ENCODE measurements at regions of chr19 and their contacts with region 1.

Region 1: DNA sequence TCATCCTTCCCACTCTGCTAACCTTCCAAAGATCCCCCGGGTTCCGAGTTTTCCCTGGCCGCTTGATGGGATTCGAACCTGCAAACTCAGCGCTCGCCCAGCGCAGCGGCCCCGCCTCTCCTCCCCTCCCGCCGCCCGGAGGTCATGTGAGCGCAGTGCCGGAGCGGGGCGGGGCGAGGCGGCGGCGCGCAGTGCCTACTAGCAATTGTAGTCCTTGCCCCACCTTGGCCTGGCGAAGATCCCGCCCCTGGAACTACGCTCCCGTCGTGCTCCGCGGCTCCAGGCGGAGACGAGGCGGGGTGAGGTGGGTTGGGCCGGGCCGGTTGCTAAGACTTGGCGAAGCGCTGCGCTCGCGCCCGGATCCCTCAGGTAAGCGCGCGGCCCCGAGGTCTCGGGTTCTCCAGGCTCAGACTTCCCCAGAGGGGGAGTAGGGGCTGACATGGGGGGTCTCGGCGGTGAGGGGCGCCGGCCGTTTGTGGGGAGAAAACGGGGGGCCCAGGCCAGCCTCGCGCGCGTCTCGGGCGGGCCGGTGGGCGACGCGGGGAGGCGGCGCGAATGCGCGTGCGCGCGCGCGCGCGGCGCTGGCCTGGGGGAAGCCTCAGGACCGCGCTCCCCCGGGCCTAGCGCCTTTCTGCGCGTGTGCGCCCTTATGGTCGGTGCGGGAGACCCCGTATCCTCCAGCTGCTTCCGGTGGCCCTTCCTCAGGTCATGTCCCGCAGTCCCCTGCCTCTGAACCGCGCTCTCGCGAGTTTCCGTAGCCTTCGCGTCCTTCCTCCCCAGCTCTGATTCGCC is at the starts of genes ADAT3 and SCAMP4:
- DNase-seq: peak; percentile 99
- H3K4me3 ChIP-seq: peak within 1 kb of the TSS; percentile 71
- H3K27ac ChIP-seq: peak within 1 kb of the TSS; percentile 97
- H3K4me1 ChIP-seq: peaks cover 32% of the 10 kb centered on the region
- CTCF ChIP-seq: no peak
- total RNA-seq, gene ADAT3: 5.6 and 7.9 TPM in 2 replicates
- total RNA-seq, gene SCAMP4: 13.4 and 21.3 TPM in 2 replicates

Region 2: DNA sequence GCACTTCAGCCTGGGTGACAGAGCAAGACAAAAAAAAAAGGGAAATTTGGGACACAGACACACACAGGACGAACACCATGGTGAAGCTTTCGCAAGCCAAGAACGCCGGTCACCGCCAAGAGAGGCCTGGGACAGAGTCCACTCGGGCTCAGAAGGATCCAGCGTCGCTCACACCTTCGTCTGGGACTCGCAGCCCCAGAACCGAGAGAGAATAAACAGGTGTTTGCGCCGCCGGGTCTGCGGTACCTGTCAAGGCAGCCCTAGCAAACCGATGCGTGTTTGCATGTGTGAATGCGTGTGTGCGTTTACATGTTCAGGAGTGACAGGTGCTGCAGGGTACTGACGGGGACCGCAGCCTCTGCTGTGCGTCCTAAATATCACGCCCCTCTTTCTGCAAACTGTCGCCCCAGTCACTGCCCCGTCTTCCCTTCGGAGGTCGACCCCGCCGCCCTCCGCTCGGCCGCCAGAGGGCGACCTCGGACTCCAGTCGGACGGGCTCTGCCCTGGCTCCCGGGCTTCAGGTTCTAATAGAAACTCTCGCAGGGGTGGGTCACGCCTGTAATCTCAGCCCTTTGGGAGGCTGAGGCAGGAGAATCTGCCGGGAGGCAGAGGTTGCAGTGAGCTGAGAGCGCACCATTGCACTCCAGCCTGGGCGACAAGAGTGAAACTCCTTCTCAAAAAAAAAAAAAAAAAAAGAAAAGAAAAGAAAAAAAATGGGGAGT is 23.9 kb after region 1 on chr19:
- CTCF ChIA-PET with region 1: no interaction called
- POLR2A ChIA-PET with region 1: no interaction called
- intact Hi-C with region 1: loop called (anchors 2 kb)
- DNase-seq: peak; percentile 89
- H3K4me3 ChIP-seq: peak overlapping the region; percentile 10
- H3K27ac ChIP-seq: no peak overlapping the region
- H3K4me1 ChIP-seq: peaks cover 13% of the 10 kb centered on the region
- CTCF ChIP-seq: peak; percentile 89

Region 3: DNA sequence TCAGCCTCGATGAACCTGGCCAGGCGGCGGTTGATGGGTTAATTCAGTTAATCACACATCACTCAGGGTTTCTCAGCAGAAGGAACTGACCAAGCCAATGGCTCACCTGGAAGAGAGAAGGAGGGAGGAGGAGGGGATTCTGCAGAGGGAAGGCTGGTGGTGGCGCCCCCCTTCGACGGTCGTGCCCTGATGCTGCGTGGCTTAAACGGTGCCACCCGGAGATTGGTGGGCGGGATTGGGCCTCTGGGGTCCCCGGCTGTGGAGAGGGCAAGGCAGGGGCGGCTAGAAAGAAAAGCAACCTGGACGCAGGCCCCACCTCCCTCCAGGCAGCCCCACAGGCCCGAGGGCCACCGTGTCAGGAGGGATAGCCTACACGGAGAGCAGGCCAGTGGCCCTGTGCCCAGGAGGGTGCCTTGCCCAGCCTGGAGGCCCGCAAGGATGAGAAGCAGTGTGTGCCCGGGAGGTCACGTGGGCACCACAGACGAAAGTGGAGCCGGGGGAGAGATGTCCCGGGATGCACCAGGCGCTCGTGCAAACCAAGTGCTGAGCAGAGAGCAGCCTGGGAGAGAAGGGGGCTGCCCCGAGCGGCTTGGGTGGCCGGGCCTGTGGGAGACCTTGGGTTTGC is 51.7 kb after region 1 on chr19:
- CTCF ChIA-PET with region 1: no interaction called
- POLR2A ChIA-PET with region 1: no interaction called
- intact Hi-C with region 1: no loop called
- DNase-seq: no peak
- H3K4me3 ChIP-seq: no peak overlapping the region
- H3K27ac ChIP-seq: no peak overlapping the region
- H3K4me1 ChIP-seq: no peaks in the 10 kb centered on the region
- CTCF ChIP-seq: no peak